ENCODE measurements at regions of chr17 and their contacts with region 1.

Region 1: GRCh38 chr17:43694077-43694870 is 32.6 kb upstream of the MEOX1 start:
- DNase-seq: peak in 1 of 2 experiments; percentile 85
- H3K4me3 ChIP-seq: no peak overlapping the region; a peak in 1 of 8 replicates
- H3K27ac ChIP-seq: no peak overlapping the region
- H3K4me1 ChIP-seq: peaks cover 0 to 6% (median 4%) of the 10 kb centered on the region in 4 experiments; a peak in 3 of 7 replicates
- H3K27me3 ChIP-seq: no peaks in the 10 kb centered on the region
- CTCF ChIP-seq: peak; percentile 65 to 98 (median 83)
- EP300 ChIP-seq: no peak
- POLR2A ChIP-seq: no peak
- RAD21 ChIP-seq: peak; percentile 95 to 98

Region 2: DNA sequence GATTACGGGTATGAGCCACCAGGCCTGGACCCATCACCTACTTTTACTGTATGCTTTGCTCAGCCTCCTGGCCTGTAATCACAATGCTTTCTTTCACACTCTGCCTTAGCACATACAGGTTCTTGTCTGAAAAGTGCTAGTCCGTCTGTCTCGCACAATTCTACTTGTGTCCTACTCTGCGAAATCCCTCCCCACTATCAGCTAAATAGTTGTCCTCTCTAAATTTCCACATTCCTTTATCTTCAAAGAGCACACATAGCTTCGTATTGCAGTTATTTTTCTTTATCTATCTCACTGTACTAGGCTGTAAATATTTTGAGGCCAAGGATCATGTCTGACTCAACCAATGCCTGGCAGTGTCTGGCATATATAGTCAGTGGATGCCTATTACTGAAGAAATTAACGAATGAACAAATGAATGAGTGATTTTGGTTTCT is 109.6 kb before region 1 on chr17:
- CTCF ChIA-PET with region 1: no interaction called
- POLR2A ChIA-PET with region 1: no interaction called
- DNase-seq: no peak
- H3K4me3 ChIP-seq: no peak overlapping the region
- H3K27ac ChIP-seq: no peak overlapping the region
- H3K4me1 ChIP-seq: no peaks in the 10 kb centered on the region
- H3K27me3 ChIP-seq: no peaks in the 10 kb centered on the region
- CTCF ChIP-seq: no peak
- EP300 ChIP-seq: no peak
- POLR2A ChIP-seq: no peak
- RAD21 ChIP-seq: no peak

Region 3: DNA sequence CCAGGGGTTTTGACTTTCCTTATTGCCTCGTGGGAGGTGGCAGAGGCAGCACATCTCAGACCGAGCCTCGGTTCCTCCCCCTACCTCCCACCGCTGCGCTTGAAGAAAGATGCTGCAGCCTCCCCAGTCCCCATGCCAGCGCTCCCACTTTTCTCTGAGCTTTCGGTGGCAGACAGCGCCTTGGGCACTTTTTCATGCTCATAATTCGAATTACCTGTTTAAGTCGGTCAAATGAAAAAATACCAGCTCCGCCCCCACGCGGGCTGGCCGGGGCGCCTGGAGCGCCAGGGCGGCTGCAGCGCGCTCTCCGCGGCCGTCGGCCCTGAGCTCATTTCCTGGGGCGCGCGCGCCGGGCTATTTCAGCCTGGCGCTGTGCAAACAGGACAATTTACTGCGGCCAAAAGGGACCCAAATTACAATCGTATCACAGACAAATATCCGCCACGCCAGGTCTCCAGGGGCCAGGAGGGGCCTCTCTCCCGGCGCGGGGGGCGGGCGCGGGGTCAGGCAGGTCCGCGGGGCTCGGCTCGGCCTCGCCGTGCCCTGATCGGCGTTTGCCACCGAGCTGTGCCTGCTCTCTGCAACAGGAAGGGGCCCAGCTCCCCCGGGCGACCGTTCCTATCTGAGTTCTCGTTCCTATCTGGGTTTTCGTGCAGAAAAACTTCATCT is 19.4 kb after region 1 on chr17:
- CTCF ChIA-PET with region 1: interaction called, 123 read pairs
- POLR2A ChIA-PET with region 1: interaction called, 3 read pairs
- DNase-seq: peak in 1 of 2 experiments; percentile 70
- H3K4me3 ChIP-seq: peak overlapping the region; percentile 47 to 72 (median 51); a peak in 7 of 8 replicates
- H3K27ac ChIP-seq: no peak overlapping the region
- H3K4me1 ChIP-seq: peaks cover 0 to 2% (median 0%) of the 10 kb centered on the region in 4 experiments; a peak in 2 of 7 replicates
- H3K27me3 ChIP-seq: peaks cover 10 to 28% (median 24%) of the 10 kb centered on the region in 4 experiments
- CTCF ChIP-seq: no peak
- EP300 ChIP-seq: no peak
- POLR2A ChIP-seq: no peak
- RAD21 ChIP-seq: no peak

Region 4: GRCh38 chr17:43723697-43724359 is 29.6 kb after region 1 on chr17:
- CTCF ChIA-PET with region 1: interaction called, 17 read pairs
- POLR2A ChIA-PET with region 1: no interaction called
- DNase-seq: no peak
- H3K4me3 ChIP-seq: no peak overlapping the region
- H3K27ac ChIP-seq: no peak overlapping the region
- H3K4me1 ChIP-seq: peaks cover 0 to 3% (median 1%) of the 10 kb centered on the region in 4 experiments; a peak in 3 of 7 replicates
- H3K27me3 ChIP-seq: no peaks in the 10 kb centered on the region; a peak in 1 of 7 replicates
- CTCF ChIP-seq: no peak
- EP300 ChIP-seq: no peak
- POLR2A ChIP-seq: no peak
- RAD21 ChIP-seq: no peak

Region 5: DNA sequence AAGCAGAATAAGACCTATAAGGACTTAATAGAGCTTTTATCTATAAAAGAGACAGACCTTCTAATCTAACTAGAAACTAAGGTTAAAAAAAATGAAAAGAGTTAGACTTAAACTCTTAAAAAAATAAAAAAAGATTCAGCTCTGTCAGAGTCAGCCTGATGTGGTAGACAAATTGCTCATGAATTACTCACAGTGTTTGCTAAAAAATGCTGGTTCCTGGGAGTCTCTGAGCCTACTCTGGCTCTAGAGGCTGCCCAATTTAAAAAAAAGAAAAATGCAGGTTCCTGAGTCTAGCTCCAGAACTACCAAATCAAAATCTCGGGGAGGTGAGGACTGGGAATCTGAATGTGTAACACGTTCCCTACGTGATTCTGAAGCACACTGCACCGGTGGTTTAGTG is 46.3 kb after region 1 on chr17:
- CTCF ChIA-PET with region 1: interaction called, 969 read pairs
- POLR2A ChIA-PET with region 1: no interaction called
- DNase-seq: no peak
- H3K4me3 ChIP-seq: no peak overlapping the region
- H3K27ac ChIP-seq: no peak overlapping the region
- H3K4me1 ChIP-seq: peaks cover 3 to 17% (median 6%) of the 10 kb centered on the region in 4 experiments
- H3K27me3 ChIP-seq: no peaks in the 10 kb centered on the region
- CTCF ChIP-seq: no peak
- EP300 ChIP-seq: no peak
- POLR2A ChIP-seq: no peak
- RAD21 ChIP-seq: no peak

Measured in H1 (cell line).